ENCODE measurements at regions of chr5 and their contacts with region 1.

Region 1: GRCh38 chr5:168765551-168766425 is 186.6 kb upstream of the PANK3 start:
- DNase-seq: no peak
- H3K4me3 ChIP-seq: no peak overlapping the region
- H3K27me3 ChIP-seq: no peaks in the 10 kb centered on the region
- CTCF ChIP-seq: no peak

Region 2: DNA sequence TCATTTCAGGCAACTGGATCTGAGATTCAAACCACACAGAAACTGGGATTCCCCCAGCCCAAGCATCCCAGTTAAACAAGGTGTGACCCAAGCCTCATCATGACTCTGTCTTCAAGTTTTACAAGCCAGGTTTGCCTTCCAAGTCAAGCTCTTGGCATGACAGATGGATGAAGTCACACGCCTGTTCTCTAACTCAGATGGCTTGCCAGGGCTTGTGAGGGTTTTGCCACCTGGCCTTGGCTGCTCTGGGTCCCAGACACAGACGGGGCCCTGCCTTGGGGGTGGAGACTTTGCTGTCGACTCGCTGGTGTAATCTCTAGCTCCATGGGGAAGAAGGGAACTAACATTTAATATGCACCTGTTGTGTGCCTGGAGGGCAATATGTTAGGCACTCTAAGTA is 375.3 kb before region 1 on chr5:
- CTCF ChIA-PET with region 1: no interaction called
- POLR2A ChIA-PET with region 1: interaction called, 10 read pairs
- DNase-seq: no peak
- H3K4me3 ChIP-seq: no peak overlapping the region
- H3K27me3 ChIP-seq: no peaks in the 10 kb centered on the region
- CTCF ChIP-seq: no peak